Calu3 (cell line): ENCODE measurements at regions of chr9 and their contacts with region 1.

Region 1: GRCh38 chr9:4489919-4490704 is at the start of gene SLC1A1:
- DNase-seq: peak; percentile 77
- H3K4me3 Mint-ChIP-seq: peak within 1 kb of the TSS; percentile 86
- H3K27ac Mint-ChIP-seq: peak within 1 kb of the TSS; percentile 92
- H3K4me1 Mint-ChIP-seq: peaks cover 41% of the 10 kb centered on the region
- H3K27me3 Mint-ChIP-seq: no peaks in the 10 kb centered on the region
- CTCF ChIP-seq: no peak
- total RNA-seq, gene SLC1A1: 71.6 and 81.4 TPM in 2 replicates

Region 2: DNA sequence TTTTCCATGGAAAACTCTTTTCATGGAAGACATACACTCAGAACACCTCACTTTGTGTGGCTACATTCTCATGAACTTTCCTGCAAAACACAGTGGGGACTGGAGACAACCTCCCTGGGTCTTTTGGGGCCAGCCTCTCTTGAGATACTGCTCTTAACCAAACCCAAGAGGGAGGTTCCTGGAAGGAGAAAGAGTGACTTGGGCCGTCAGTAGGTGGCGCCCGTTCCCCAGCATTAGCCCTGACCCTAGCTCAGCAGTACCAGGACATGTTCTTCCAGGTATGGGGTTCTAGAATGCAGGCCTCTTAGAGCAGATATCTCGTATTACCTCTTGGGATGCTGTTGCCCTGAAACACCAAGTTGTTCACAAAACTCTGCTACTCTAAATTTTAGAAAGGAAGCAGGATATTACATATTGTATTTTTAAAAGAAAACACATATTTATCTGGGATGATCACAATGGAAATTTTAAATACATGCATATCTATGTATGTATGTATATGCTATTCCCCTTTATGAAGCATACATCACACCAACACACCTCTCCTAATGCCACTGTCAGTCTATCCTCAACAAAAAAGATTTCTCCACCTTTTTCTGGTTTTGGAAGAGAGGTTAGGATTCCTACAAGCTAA is 174.4 kb before region 1 on chr9:
- CTCF ChIA-PET with region 1: no interaction called
- intact Hi-C with region 1: no loop called
- DNase-seq: peak; percentile 81
- H3K4me3 Mint-ChIP-seq: no peak overlapping the region
- H3K27ac Mint-ChIP-seq: no peak overlapping the region
- H3K4me1 Mint-ChIP-seq: peaks cover 8% of the 10 kb centered on the region
- H3K27me3 Mint-ChIP-seq: no peaks in the 10 kb centered on the region
- CTCF ChIP-seq: peak; percentile 74

Region 3: DNA sequence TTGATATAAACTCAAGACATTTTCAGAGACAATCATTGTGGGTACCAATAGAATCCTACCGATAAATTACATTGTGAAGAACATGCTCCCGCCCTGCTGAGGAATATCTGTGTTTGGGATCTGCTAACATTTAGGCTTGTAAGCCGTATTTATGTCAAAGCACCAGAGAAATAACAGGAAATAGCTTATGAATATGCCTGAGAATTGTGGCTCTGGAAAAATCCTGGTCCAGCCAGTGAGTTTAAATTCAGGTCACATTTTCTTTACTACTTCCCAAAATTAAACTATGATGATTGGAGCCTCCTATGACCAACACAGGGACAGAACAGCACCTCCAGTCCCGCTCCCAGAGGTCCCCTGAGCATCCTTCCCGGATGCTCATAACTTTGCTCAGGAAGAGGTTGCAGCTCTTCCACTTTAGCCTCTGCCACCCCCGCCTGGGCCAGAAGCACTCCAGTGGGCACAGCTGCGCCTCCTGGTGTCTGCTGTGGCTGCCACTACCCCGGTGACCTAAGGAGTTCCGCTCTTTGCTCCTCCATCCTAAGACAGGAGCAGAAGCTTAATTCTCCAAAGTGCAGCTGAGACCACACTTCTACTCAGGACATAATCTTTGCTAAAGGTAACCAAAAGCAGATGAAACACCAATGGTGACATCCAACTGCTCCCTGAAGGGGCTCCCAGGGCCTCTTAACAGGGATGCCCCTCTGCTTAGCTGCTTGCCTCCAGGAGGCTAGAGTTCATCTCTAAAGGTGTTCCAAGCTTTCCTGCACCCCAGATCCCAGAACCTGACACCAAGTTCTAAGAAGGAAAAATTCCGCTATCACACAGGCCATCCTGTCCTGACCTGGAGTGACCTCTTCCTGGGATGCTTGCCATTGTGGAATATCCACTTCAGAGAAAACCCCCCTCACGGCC is 59.0 kb after region 1 on chr9:
- CTCF ChIA-PET with region 1: no interaction called
- intact Hi-C with region 1: loop called (anchors 10 kb)
- DNase-seq: peak; percentile 21
- H3K4me3 Mint-ChIP-seq: no peak overlapping the region
- H3K27ac Mint-ChIP-seq: no peak overlapping the region
- H3K4me1 Mint-ChIP-seq: peaks cover 10% of the 10 kb centered on the region
- H3K27me3 Mint-ChIP-seq: no peaks in the 10 kb centered on the region
- CTCF ChIP-seq: no peak

Region 4: DNA sequence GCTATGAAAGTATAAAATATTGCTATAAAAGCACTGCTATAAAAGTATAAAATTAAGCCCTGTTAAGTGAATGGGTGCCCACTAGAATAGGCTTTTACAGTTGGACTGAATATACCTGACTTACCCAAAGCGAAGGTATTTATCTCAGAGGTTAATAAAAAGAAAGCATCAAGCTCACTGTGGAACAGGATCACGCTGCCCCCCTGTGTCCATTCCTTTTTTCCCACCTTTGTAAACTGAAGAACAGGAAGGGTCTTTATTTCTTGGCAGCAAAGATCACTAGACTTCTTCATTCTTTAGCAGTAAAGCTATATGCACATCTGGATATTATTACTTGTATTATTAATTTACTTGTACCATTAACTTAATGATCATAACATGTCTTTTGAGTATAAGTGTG is 149.9 kb after region 1 on chr9:
- CTCF ChIA-PET with region 1: no interaction called
- intact Hi-C with region 1: loop called (anchors 5 kb)
- DNase-seq: peak; percentile 48
- H3K4me3 Mint-ChIP-seq: no peak overlapping the region
- H3K27ac Mint-ChIP-seq: no peak overlapping the region
- H3K4me1 Mint-ChIP-seq: no peaks in the 10 kb centered on the region
- H3K27me3 Mint-ChIP-seq: no peaks in the 10 kb centered on the region
- CTCF ChIP-seq: peak; percentile 35

Region 5: DNA sequence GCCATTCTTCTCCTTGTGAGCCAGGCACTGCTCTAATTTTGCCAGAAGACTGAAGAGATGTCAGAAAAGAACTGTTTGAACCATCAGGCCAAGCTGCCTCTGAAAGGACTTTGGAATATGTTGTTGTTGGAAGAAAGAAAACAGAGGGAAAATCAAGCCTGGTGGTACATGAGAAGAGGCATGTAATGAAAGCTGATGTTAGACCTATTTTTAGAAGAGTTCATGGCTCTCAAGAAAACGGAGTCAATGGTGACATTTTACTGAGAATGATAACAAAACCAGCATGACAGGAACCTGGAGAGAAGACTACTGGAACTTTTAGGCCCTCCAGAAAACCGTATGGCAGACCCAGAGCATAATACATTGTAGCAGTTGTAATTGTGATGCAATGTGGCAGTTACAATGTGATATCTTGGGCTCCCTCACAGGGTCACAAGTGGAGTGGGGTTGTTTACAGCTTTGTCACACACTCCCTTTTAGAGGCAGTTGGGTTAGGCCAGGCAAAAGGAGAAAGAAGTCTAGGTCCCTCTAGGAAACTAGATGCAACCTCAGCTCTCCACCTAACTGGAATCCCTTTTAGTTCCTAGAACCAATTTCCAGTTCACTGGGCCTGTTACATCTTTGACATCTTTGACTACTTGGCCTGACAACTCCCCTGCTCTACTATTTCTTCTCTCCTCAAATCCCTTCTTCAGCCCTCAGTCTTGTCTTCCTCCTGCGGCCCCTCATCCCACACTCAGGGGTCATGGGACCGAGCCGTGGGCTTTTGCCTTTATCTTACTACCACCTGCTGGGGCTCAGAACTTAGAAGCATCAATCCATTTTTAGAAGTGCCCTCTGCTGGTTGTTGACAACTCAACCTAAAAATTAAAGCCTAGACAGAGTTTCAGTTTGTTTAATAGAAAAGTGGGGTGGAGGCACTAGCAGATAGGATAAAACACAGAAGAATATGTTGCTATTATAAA is 433.8 kb after region 1 on chr9:
- CTCF ChIA-PET with region 1: no interaction called
- intact Hi-C with region 1: no loop called
- DNase-seq: peak; percentile 3
- H3K4me3 Mint-ChIP-seq: no peak overlapping the region
- H3K27ac Mint-ChIP-seq: no peak overlapping the region
- H3K4me1 Mint-ChIP-seq: peaks cover 8% of the 10 kb centered on the region
- H3K27me3 Mint-ChIP-seq: no peaks in the 10 kb centered on the region
- CTCF ChIP-seq: no peak

Region 6: GRCh38 chr9:4955836-4956235 is 465.7 kb after region 1 on chr9:
- CTCF ChIA-PET with region 1: no interaction called
- intact Hi-C with region 1: no loop called
- DNase-seq: no peak
- H3K4me3 Mint-ChIP-seq: no peak overlapping the region
- H3K27ac Mint-ChIP-seq: no peak overlapping the region
- H3K4me1 Mint-ChIP-seq: no peaks in the 10 kb centered on the region
- H3K27me3 Mint-ChIP-seq: peaks cover 13% of the 10 kb centered on the region
- CTCF ChIP-seq: no peak